ENCODE measurements at regions of chr1 and their contacts with region 1.

Region 1: DNA sequence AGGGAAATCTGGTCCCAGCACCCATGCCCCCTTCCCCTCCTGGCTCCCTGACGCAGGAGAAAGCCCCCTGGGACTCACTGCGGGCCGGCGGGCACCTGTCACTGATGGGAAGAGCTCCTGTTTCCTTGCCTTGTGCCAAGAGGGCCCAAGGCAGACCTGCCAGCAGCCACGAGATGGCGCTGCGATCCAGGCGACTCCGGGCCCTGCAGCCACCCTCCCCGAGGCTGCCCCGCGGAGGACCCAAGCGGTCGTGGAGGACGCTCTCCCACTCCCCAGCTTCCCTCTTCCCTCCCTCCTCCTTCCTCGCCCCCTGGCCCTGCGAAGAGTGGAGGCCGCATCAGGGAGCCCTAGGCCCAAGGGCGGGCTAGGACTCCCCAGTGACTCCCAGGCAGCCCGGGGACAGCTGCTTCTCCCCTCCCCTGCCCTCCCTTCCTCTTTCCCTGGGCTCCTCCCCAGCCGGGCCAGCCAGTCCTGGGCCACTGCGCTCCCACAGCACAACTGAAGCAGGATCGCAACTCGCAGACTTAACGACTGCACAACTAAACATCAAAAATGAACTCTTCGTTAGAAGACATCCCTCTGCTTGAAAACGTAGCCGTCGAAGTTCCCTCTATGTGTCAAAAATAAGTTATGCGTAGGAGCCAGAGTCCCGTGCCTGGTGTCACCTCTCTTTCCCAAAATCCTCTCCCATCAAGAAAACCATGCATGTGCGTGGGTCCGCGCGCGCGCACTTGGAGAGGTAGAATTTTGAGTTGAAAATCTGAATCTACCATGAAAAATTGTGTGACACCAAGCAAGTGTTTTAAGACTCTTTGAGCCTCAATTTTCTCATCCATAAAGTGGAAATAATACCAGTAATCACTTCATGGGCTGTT is 34.2 kb downstream of the BATF3 start:
- DNase-seq: peak; percentile 56
- H3K4me3 Mint-ChIP-seq: no peak overlapping the region
- H3K27ac Mint-ChIP-seq: peak overlapping the region; percentile 62
- H3K4me1 Mint-ChIP-seq: peaks cover 16% of the 10 kb centered on the region
- H3K27me3 Mint-ChIP-seq: peaks cover 21% of the 10 kb centered on the region
- CTCF ChIP-seq: peak; percentile 75

Region 2: GRCh38 chr1:212699104-212699624 is 33.7 kb after region 1 on chr1:
- CTCF ChIA-PET with region 1: interaction called, 3 read pairs
- POLR2A ChIA-PET with region 1: interaction called, 4 read pairs
- intact Hi-C with region 1: loop called (anchors 2 kb)
- DNase-seq: peak; percentile 59
- H3K4me3 Mint-ChIP-seq: peak overlapping the region; percentile 71
- H3K27ac Mint-ChIP-seq: no peak overlapping the region
- H3K4me1 Mint-ChIP-seq: peaks cover 12% of the 10 kb centered on the region
- H3K27me3 Mint-ChIP-seq: peaks cover 62% of the 10 kb centered on the region
- CTCF ChIP-seq: peak; percentile 91

Region 3: DNA sequence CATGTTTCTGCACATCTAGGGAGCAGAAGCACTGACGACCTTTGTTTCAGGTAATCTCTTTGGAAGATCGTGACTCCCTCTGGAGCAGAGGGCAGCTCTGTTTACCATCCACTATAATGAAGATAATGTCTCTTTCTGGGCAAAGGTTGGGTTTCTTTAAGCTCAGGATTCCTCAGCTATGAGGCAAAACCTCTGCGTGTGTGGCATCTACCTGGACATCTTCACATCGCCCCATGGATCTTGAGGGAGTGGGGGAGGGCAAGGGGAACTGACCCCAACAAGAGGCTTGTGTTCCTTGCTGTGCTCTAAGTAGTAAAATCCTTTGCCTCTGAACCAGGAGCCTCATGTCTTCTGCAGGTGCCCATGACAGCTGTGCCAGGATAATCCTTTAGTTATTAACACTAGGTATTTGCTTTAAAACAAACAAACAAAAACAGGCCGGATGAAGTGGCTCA is 162.4 kb after region 1 on chr1:
- CTCF ChIA-PET with region 1: no interaction called
- POLR2A ChIA-PET with region 1: no interaction called
- intact Hi-C with region 1: no loop called
- DNase-seq: no peak
- H3K4me3 Mint-ChIP-seq: no peak overlapping the region
- H3K27ac Mint-ChIP-seq: no peak overlapping the region
- H3K4me1 Mint-ChIP-seq: no peaks in the 10 kb centered on the region
- H3K27me3 Mint-ChIP-seq: no peaks in the 10 kb centered on the region
- CTCF ChIP-seq: no peak